ENCODE measurements at regions of chr18 and their contacts with region 1.

Region 1: GRCh38 chr18:31819925-31820229 is 59.2 kb upstream of the SLC25A52 start:
- DNase-seq: no peak
- H3K4me3 ChIP-seq: no peak overlapping the region
- H3K27ac ChIP-seq: no peak overlapping the region
- H3K27me3 ChIP-seq: no peaks in the 10 kb centered on the region
- CTCF ChIP-seq: peak in 8 of 56 donors; percentile 4 to 43 (median 20)

Region 2: DNA sequence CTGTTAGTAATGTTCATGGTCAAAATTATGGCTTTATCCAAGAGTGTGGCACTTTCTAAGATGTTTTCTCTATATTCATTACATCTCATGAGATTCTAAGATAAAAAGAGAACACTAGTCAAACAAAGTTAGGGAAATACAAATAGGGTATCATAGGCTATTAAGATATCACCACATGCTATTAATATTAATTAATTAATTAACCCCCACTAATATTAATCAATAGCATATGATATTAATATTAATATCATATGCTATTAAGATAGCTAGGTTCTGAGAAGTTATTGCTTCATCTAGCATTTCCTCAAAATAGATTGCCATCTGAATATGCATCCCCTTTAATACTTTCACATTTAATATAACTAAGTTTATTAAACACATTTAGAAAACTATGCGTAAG is 350.2 kb before region 1 on chr18:
- intact Hi-C with region 1: no loop called
- DNase-seq: no peak
- H3K4me3 ChIP-seq: no peak overlapping the region
- H3K27ac ChIP-seq: no peak overlapping the region
- H3K27me3 ChIP-seq: peaks cover 0 to 8% (median 0%) of the 10 kb centered on the region in 45 donors
- CTCF ChIP-seq: no peak

Region 3: DNA sequence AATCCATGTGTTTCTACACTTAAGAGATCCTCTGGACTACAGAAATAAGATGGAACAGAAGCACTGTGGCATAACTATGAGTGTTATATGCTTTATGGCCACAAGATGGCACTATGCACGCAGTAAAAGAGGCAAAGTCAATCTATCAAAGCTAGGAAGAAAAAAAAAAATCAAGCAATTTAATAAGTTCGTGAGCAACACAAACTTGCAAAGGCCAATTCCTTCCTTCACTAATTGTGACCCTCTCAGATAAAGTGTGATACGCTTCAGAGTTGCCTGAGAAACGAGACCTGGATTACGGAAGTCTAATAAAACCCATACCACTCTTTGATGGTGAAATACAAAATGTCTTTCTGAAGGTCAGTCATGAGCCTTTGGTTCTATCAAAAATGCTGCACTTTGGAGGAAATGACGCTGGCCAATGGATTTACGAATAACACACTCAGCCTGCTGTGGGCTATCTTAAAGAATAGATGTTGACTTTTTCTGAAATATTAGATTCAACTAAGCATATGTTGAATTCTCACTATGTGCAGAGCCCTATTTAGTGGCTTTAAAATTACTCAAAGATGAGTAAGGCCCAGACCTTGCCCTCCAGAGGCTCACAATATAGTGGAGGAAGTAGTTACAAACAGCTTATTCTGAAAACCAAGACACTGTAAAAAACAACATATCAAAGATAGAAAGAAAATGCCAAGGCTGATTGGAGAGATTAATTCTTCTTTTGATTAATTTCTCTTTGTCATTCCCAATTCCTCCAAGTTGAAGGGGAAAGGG is 263.7 kb before region 1 on chr18:
- intact Hi-C with region 1: loop called (anchors 5 to 10 kb)
- DNase-seq: peak in 2 of 10 donors; percentile 37 to 45
- H3K4me3 ChIP-seq: no peak overlapping the region
- H3K27ac ChIP-seq: no peak overlapping the region
- H3K27me3 ChIP-seq: peaks cover 0 to 5% (median 0%) of the 10 kb centered on the region in 45 donors
- CTCF ChIP-seq: peak; percentile 73 to 98 (median 88)

Region 4: GRCh38 chr18:31563778-31564177 is 256.1 kb before region 1 on chr18:
- intact Hi-C with region 1: loop called in 1 of 2 experiments (anchors 10 kb)
- DNase-seq: no peak
- H3K4me3 ChIP-seq: no peak overlapping the region
- H3K27ac ChIP-seq: no peak overlapping the region
- H3K27me3 ChIP-seq: peaks cover 0 to 17% (median 0%) of the 10 kb centered on the region in 45 donors
- CTCF ChIP-seq: peak in 41 of 56 donors; percentile 7 to 51 (median 22)

Region 5: DNA sequence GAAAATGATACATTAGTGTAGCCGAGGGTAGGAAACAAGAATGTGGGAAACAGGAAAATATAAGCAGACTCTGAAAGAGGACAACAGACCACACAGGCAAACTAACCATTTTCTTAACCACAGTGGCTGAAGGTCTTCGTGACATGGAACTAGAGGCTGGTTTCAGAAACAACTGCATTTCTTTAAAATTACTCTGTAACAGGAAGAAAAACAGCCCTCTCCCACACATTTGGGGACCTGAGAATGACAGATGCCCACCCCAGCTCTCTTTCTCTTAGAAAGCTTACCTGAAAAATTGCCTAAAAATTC is 45.4 kb before region 1 on chr18:
- intact Hi-C with region 1: no loop called
- DNase-seq: no peak
- H3K4me3 ChIP-seq: no peak overlapping the region
- H3K27ac ChIP-seq: no peak overlapping the region
- H3K27me3 ChIP-seq: no peaks in the 10 kb centered on the region
- CTCF ChIP-seq: no peak

Measured in dorsolateral prefrontal cortex (tissue), 120 donors.